ENCODE measurements at regions of chr14 and their contacts with region 1.

Region 1: GRCh38 chr14:93219103-93219726 is 12.2 kb downstream of the UBR7 start:
- DNase-seq: no peak
- ATAC-seq: peak in 3 of 4 donors; percentile 51 to 65 (median 65)
- H3K4me3 ChIP-seq: no peak overlapping the region
- H3K27ac ChIP-seq: no peak overlapping the region
- H3K4me1 ChIP-seq: no peaks in the 10 kb centered on the region
- H3K27me3 ChIP-seq: no peaks in the 10 kb centered on the region
- CTCF ChIP-seq: peak; percentile 16 to 62 (median 42)
- POLR2A ChIP-seq: no peak

Region 2: GRCh38 chr14:93493054-93493453 is 273.8 kb after region 1 on chr14:
- intact Hi-C with region 1: no loop called
- DNase-seq: no peak
- ATAC-seq: peak; percentile 51 to 81 (median 56)
- H3K4me3 ChIP-seq: no peak overlapping the region
- H3K27ac ChIP-seq: no peak overlapping the region
- H3K4me1 ChIP-seq: no peaks in the 10 kb centered on the region
- H3K27me3 ChIP-seq: no peaks in the 10 kb centered on the region
- CTCF ChIP-seq: no peak
- POLR2A ChIP-seq: no peak

Region 3: DNA sequence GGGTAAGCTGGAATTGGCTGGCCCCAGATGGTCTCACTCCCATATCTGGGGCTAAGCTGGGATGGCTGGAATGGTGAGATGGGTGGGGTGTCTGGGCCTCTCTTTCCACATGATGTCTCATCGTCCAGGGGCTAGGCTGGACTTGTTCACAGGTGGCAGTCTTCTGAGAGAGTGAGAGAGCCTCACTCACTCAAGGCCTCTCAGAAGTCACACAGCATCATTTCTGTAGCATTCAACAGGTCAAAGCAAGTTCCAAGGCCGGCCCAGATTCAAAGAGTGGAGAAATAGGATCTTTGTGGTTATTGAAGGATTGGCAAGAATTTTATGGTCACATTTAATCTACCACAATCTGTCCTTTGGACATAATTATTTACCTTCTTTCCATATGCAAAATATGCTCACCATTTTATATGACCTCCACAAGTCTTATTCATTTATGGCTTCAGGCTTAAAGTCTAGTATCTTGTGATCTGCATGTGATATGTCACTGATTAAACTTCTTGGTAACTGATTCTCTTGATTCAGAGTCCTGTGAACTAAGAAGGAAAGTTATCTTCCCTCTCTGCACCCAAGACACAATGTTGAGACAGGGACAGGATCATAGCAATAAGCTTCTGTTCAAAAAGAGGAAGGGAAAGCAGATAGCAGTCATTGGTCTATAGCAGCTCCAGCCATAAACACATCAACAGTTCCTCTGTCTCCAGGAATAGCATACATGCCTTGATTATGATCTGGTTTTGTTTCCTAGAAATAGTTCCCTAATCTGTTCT is 314.4 kb after region 1 on chr14:
- intact Hi-C with region 1: loop called in 1 of 10 experiments (anchors 10 kb)
- DNase-seq: no peak
- ATAC-seq: peak in 2 of 4 donors; percentile 53 to 69
- H3K4me3 ChIP-seq: no peak overlapping the region
- H3K27ac ChIP-seq: peak overlapping the region in 1 of 12 donors; percentile 55
- H3K4me1 ChIP-seq: peaks cover 0 to 19% (median 0%) of the 10 kb centered on the region in 12 donors
- H3K27me3 ChIP-seq: no peaks in the 10 kb centered on the region
- CTCF ChIP-seq: no peak
- POLR2A ChIP-seq: no peak

Region 4: GRCh38 chr14:93619176-93619793 is 400.1 kb after region 1 on chr14:
- intact Hi-C with region 1: loop called in 2 of 10 experiments (anchors 10 kb)
- DNase-seq: peak in 2 of 5 donors; percentile 29 to 34
- ATAC-seq: no peak
- H3K4me3 ChIP-seq: no peak overlapping the region
- H3K27ac ChIP-seq: no peak overlapping the region
- H3K4me1 ChIP-seq: no peaks in the 10 kb centered on the region
- H3K27me3 ChIP-seq: peaks cover 0 to 5% (median 0%) of the 10 kb centered on the region in 9 donors
- CTCF ChIP-seq: peak; percentile 32 to 71 (median 53)
- POLR2A ChIP-seq: no peak

Measured in heart left ventricle (tissue), 16 donors.